Ovary (tissue), 10 donors: ENCODE measurements at regions of chr10 and their contacts with region 1.

Region 1: DNA sequence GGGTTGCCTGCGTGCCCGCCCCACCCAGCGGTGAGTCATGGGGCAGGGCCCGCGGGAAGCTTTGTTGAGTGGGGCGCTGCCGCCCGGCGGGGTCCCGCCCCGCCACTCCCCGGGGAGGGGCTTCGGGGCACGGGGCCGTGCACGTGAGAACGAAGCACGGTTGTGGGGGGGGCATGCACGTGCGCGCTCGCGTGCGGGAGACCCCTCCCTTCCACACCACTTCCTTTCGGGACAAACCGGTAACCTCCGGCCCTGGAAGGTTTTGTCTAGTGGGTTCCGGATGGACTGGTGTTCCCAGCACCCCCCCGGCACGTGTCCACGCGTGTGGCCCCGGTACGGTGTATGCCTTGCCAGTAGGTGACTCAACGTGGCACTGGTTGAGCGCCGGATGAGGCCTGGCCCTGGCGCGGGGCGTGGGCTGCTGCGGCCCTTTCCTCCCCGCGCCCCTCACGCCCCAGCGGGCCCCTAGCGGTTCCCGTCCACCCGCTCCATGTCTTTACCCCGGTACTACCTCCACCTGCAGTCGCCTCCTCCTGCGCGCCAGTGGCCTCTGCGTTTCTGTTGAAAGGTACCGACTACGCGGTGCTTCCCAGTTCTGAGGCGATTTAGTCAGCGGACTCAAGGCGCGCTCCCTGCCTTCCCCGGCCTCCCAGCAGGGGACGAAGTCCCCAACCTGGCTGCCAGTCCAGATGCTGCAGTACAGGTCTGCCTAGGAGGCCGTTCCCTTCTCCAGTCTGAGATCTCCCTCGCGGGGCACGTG is 3.1 kb downstream of the ADIRF start:
- DNase-seq: peak; percentile 93 to 98 (median 98)
- H3K4me3 ChIP-seq: peak overlapping the region; percentile 71
- H3K27ac ChIP-seq: peak overlapping the region; percentile 97 to 99
- H3K4me1 ChIP-seq: peaks cover 17% of the 10 kb centered on the region
- H3K27me3 ChIP-seq: no peaks in the 10 kb centered on the region
- CTCF ChIP-seq: peak in 2 of 3 donors; percentile 2 to 31
- EP300 ChIP-seq: peak; percentile 92
- POLR2A ChIP-seq: no peak

Region 2: GRCh38 chr10:86798611-86799010 is 172.8 kb before region 1 on chr10:
- intact Hi-C with region 1: no loop called
- DNase-seq: no peak
- H3K4me3 ChIP-seq: no peak overlapping the region
- H3K27ac ChIP-seq: no peak overlapping the region
- H3K4me1 ChIP-seq: peaks cover 5% of the 10 kb centered on the region
- H3K27me3 ChIP-seq: no peaks in the 10 kb centered on the region
- CTCF ChIP-seq: no peak
- EP300 ChIP-seq: no peak
- POLR2A ChIP-seq: no peak

Region 3: GRCh38 chr10:86953747-86954680 is 17.4 kb before region 1 on chr10:
- intact Hi-C with region 1: loop called in 1 of 4 experiments (anchors 2 kb)
- DNase-seq: peak; percentile 89 to 93 (median 90)
- H3K4me3 ChIP-seq: no peak overlapping the region
- H3K27ac ChIP-seq: peak overlapping the region; percentile 75 to 89
- H3K4me1 ChIP-seq: peaks cover 33% of the 10 kb centered on the region
- H3K27me3 ChIP-seq: no peaks in the 10 kb centered on the region
- CTCF ChIP-seq: no peak
- EP300 ChIP-seq: no peak
- POLR2A ChIP-seq: no peak